PC-9 (cell line): ENCODE measurements at regions of chr10 and their contacts with region 1.

Region 1: GRCh38 chr10:21278491-21279239 is 246.8 kb downstream of the SKIDA1 start:
- DNase-seq: peak; percentile 71 to 90
- H3K4me3 ChIP-seq: no peak overlapping the region
- H3K27ac ChIP-seq: 0 out of 2 replicates have a peak overlapping the region, but pooled peaks have one; percentile 25
- H3K4me1 ChIP-seq: peaks cover 19% of the 10 kb centered on the region
- H3K27me3 ChIP-seq: no peaks in the 10 kb centered on the region
- CTCF ChIP-seq: peak; percentile 89

Region 2: GRCh38 chr10:21257926-21258325 is 20.7 kb before region 1 on chr10:
- CTCF ChIA-PET with region 1: no interaction called
- POLR2A ChIA-PET with region 1: no interaction called
- intact Hi-C with region 1: no loop called
- DNase-seq: no peak
- H3K4me3 ChIP-seq: no peak overlapping the region
- H3K27ac ChIP-seq: no peak overlapping the region
- H3K4me1 ChIP-seq: no peaks in the 10 kb centered on the region
- H3K27me3 ChIP-seq: no peaks in the 10 kb centered on the region
- CTCF ChIP-seq: no peak

Region 3: DNA sequence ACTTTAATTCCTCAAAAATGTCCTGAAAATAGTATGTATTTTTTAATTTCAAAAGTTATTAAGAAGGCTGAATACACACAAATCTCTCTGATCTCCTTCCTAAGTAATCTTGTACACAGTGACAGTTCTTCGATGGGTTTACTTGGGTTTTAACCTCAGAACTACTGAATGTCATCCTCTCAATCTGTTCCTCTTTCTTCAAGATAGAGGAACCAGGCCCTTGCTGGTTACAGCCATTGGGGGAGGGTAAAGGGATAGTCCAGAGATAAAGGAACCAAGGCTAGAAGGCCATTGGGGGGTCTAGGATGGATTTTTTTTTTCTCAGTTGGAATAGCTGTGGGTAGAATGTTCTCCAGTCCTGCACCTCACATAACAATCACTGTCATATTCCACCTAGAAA is 21.9 kb after region 1 on chr10:
- CTCF ChIA-PET with region 1: no interaction called
- POLR2A ChIA-PET with region 1: no interaction called
- intact Hi-C with region 1: no loop called
- DNase-seq: no peak
- H3K4me3 ChIP-seq: no peak overlapping the region
- H3K27ac ChIP-seq: no peak overlapping the region
- H3K4me1 ChIP-seq: peaks cover 6% of the 10 kb centered on the region
- H3K27me3 ChIP-seq: no peaks in the 10 kb centered on the region
- CTCF ChIP-seq: no peak

Region 4: DNA sequence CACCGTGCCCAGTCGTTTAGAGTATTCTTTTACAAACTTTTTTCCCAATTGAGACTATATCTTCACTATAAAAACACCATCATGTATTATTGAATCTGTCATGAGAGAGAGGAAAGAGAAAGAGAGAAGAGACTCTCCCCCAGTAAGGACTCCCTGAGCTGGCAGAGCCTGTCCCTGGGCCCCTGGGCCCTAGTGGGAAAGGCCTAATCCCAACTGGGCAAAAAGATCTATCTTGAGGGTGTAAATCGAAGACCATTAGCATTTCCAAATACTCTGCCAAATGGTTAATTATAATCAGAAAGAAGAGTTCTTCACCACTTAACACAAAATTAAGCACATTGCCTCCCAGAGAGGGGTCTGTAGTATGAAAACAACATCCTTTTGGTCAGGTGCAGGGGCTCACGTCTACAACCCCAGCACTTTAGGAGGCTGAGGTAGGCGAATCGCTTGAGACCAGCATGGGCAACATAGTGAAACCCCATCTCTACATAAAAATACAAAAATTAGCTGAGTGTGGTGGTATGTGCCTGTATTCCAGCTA is 138.6 kb after region 1 on chr10:
- CTCF ChIA-PET with region 1: no interaction called
- POLR2A ChIA-PET with region 1: interaction called, 13 read pairs
- intact Hi-C with region 1: no loop called
- DNase-seq: no peak
- H3K4me3 ChIP-seq: no peak overlapping the region
- H3K27ac ChIP-seq: no peak overlapping the region
- H3K4me1 ChIP-seq: no peaks in the 10 kb centered on the region
- H3K27me3 ChIP-seq: no peaks in the 10 kb centered on the region
- CTCF ChIP-seq: no peak

Region 5: DNA sequence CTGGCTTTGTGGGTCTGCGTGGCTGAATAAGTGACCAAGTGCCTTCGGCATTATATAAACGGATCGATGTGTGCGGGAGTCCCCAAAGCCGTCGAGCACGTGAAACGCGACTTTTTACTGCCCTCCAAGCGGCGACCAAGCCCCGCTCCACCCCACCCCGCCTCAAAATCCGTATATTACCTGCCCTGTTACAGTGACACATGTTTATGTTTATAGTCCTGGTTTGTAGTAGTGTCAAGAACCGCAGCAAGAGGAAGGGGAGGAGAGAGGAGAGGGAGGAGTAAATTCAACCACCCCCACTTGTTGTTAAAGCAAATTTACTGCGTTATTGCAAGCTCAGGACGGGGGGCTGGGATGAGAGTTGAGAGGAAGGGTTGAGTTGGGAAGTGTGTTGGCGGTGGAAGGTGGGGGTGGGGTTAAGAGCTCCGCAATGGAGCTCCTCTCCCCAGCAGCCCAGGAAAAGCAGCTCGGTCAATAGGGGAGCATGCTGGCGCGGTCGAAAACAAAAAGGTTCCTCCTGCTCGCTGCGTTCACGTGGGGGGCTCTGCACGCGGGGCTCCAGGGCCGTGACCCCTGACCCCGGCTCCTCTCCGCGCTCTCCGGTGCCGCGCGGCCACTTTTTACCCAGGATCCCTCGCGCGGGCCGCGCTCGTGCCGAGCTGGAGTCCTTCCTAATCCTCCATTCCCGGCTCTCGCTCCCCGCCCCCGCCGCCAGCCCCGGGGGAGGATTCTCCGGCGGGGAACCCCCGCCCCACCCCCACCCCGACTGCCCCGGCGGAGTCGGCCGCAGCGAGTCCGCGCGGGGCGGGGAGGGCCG is 246.9 kb after region 1 on chr10 and contains the start of gene SKIDA1:
- CTCF ChIA-PET with region 1: no interaction called
- POLR2A ChIA-PET with region 1: no interaction called
- intact Hi-C with region 1: loop called (anchors 2 kb)
- DNase-seq: peak; percentile 85
- H3K4me3 ChIP-seq: peak within 1 kb of the TSS; percentile 71
- H3K27ac ChIP-seq: peak within 1 kb of the TSS; percentile 79
- H3K4me1 ChIP-seq: peaks cover 32% of the 10 kb centered on the region
- H3K27me3 ChIP-seq: no peaks in the 10 kb centered on the region
- CTCF ChIP-seq: no peak
- total RNA-seq, gene SKIDA1: 0.65 and 1.1 TPM in 2 replicates

Region 6: DNA sequence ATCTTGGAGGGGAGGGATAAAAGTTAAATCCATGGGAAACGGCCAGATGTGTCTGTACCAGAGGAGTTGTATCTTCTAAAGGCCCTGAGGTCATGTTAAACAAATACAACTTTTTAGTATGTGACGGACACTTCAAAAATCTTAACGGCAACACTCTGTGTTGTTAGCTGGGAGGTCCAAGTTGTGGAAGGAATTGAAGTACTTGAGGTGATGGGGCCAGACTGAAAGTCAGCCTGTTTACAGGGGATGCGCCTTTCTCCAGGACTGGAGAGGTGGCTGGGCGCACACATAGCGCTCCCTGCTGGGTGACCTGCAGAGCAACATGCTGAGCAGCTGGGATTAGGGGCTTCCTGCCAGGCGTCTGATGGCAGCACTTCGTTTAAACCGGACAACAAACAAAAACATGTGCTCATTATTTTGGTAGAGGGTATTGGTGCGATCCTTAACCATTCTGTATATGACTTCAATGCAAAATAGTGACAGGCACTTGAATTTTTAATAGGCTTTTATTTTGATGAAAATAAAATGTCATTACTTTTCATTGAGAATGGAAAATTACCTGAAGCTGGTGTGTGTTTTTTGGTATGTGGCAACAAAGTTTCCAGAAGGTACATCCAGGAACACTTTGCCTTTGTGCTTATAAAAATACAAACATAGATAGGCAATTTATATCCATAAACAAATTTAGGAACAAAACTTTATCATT is 453.6 kb after region 1 on chr10:
- CTCF ChIA-PET with region 1: no interaction called
- POLR2A ChIA-PET with region 1: no interaction called
- intact Hi-C with region 1: loop called (anchors 5 kb)
- DNase-seq: no peak
- H3K4me3 ChIP-seq: no peak overlapping the region
- H3K27ac ChIP-seq: no peak overlapping the region
- H3K4me1 ChIP-seq: no peaks in the 10 kb centered on the region
- H3K27me3 ChIP-seq: no peaks in the 10 kb centered on the region
- CTCF ChIP-seq: peak; percentile 48